GM18951 (cell line): ENCODE measurements at regions of chr2 and their contacts with region 1.

Region 1: GRCh38 chr2:233460726-233461441 is 105.7 kb downstream of the USP40 start:
- POLR2A ChIP-seq: no peak

Region 2: DNA sequence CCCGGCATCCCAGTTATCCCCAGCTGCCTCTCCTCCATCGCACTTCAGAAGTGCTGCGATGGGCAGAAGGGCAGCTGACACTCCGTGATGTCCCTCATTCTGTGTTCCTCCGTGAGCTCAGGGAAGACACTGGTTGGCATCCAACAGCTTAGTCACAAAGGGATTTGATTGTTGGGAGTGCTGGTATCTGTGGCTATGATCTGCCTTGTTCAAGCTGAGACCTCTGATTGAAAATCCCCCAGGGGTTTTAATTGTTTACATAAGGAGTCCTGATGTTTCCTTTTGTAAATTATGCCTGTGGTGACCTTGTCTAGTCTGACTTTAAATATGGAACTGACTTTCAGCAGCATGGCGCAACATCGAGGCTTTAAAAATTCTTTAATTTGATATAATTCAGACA is 172.2 kb before region 1 on chr2:
- in situ Hi-C with region 1: no loop called
- POLR2A ChIP-seq: no peak

Region 3: DNA sequence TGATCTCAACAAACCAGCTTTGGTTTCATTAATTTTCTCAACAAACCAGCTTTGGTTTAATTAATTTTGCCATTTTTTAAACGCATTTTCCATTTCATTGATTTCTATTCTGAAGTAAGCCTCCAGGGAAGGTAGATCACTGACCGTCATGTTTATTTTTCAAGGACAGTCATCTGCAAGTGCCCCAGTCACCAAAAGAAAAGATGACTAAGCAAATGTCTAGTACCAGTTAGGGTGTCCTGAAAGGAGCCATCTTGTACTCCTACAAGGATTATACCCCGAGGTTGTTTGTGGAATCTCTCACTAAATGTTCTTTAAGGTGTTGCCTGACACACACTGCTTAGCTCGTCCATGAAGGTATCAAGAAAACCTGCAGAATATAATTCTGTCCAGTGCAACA is 150.4 kb after region 1 on chr2:
- in situ Hi-C with region 1: no loop called
- POLR2A ChIP-seq: no peak

Region 4: DNA sequence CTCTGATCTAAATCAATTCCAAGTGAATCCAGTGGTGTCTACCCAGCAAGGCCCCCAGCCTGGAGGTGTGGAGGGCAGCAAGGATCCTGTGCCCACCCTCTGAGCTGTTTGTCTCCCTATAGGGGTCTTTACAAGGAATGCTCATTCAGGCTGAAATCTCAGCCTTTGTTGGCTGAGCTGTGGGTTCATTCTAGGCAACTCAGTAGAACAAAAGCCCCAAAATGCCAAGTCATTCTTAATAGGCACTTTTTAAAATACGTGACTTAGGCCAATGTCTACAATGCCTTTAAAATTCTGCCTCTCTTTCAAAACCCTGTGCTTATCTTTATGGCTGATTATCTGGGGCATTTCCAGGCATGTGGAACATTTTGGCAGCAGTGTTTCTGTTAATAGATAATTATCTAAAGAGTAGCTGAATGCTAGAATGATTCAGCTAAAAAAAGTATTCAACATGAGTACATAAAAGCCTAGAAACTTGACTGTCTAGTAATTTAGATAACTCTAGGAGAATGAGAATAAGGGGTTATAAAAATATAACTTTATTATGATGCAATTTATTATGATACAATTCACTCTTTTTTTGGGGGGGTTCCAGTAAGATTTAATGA is 239.2 kb after region 1 on chr2:
- in situ Hi-C with region 1: no loop called
- POLR2A ChIP-seq: no peak

Region 5: GRCh38 chr2:233801357-233802131 is 340.7 kb after region 1 on chr2:
- in situ Hi-C with region 1: loop called (anchors 10 kb)
- POLR2A ChIP-seq: no peak